ENCODE measurements at regions of chr3 and their contacts with region 1.

Region 1: GRCh38 chr3:119637679-119638525 is 22.5 kb downstream of the POPDC2 start:
- DNase-seq: no peak
- H3K4me3 Mint-ChIP-seq: no peak overlapping the region
- H3K27ac Mint-ChIP-seq: peak overlapping the region; percentile 92
- H3K4me1 Mint-ChIP-seq: peaks cover 45% of the 10 kb centered on the region
- H3K27me3 Mint-ChIP-seq: no peaks in the 10 kb centered on the region

Region 2: GRCh38 chr3:119322835-119323722 is 314.8 kb before region 1 on chr3:
- CTCF ChIA-PET with region 1: no interaction called
- POLR2A ChIA-PET with region 1: interaction called, 4 read pairs
- intact Hi-C with region 1: loop called (anchors 1 kb)
- DNase-seq: peak; percentile 97
- H3K4me3 Mint-ChIP-seq: peak overlapping the region; percentile 82
- H3K27ac Mint-ChIP-seq: peak overlapping the region; percentile 95
- H3K4me1 Mint-ChIP-seq: peaks cover 41% of the 10 kb centered on the region
- H3K27me3 Mint-ChIP-seq: no peaks in the 10 kb centered on the region

Region 3: DNA sequence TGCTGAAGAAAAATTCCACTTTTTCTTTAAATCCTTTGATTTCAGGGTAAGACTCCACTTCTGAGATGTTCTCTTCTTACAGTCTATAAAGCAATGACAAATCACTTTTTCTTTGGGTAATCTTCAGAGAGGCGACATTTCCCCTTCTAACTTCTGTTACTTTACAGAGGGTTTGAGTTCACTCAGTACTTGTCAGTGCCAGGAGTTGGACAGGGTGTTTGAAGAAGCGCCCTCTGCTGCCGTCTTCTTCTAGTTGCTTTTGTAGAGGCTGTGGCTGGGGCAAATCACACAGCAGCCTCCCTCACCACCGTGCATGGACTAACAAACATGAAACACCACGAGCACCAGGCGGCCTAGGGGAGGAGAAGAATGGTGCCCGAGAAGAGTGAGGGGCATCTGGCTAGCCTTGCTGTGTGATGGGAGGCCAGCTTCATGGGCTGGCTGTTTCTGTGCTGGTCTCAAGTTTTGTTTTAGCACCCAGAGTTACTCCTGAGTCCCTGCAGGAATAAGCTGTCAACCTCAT is 78.4 kb before region 1 on chr3 and contains the start of gene CD80:
- CTCF ChIA-PET with region 1: no interaction called
- POLR2A ChIA-PET with region 1: no interaction called
- intact Hi-C with region 1: loop called (anchors 1 kb)
- DNase-seq: peak; percentile 84
- H3K4me3 Mint-ChIP-seq: peak within 1 kb of the TSS; percentile 24
- H3K27ac Mint-ChIP-seq: peak within 1 kb of the TSS; percentile 56
- H3K4me1 Mint-ChIP-seq: peaks cover 24% of the 10 kb centered on the region
- H3K27me3 Mint-ChIP-seq: no peaks in the 10 kb centered on the region
- total RNA-seq, gene CD80: 3.4 to 3.7 TPM

Region 4: DNA sequence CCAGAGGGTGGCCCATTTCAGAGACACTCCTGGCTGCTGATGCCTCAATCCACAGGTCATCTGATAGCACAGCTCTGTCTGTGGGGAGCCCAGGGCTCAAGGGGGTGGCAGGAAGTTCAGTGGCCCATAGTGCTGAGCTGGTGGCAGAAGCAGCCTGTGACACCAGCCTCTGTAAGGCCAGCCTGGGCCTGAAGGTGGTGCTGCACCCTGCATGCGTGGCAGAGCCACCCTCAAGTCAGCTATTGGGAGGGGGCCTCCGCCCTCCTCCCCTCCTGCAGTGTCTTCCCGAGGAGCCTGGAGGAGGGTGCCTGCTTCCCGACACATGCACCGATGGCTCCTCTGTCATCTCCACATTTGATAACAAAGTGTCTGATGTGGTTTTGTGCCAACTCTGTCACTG is 37.2 kb before region 1 on chr3:
- CTCF ChIA-PET with region 1: interaction called, 4 read pairs
- POLR2A ChIA-PET with region 1: no interaction called
- intact Hi-C with region 1: loop called (anchors 1 kb)
- DNase-seq: peak; percentile 70
- H3K4me3 Mint-ChIP-seq: no peak overlapping the region
- H3K27ac Mint-ChIP-seq: no peak overlapping the region
- H3K4me1 Mint-ChIP-seq: peaks cover 27% of the 10 kb centered on the region
- H3K27me3 Mint-ChIP-seq: peaks cover 2% of the 10 kb centered on the region

Region 5: GRCh38 chr3:119937229-119937628 is 299.3 kb after region 1 on chr3:
- CTCF ChIA-PET with region 1: no interaction called
- POLR2A ChIA-PET with region 1: no interaction called
- intact Hi-C with region 1: no loop called
- DNase-seq: peak; percentile 72
- H3K4me3 Mint-ChIP-seq: no peak overlapping the region
- H3K27ac Mint-ChIP-seq: peak overlapping the region; percentile 44
- H3K4me1 Mint-ChIP-seq: peaks cover 34% of the 10 kb centered on the region
- H3K27me3 Mint-ChIP-seq: no peaks in the 10 kb centered on the region